ENCODE measurements at regions of chr19 and their contacts with region 1.

Region 1: GRCh38 chr19:41531438-41532311 is 44.3 kb upstream of the CEACAM21 start:
- DNase-seq: peak; percentile 87
- H3K4me3 Mint-ChIP-seq: peak overlapping the region; percentile 82
- H3K27ac Mint-ChIP-seq: peak overlapping the region; percentile 87
- H3K4me1 Mint-ChIP-seq: peaks cover 91% of the 10 kb centered on the region
- H3K27me3 Mint-ChIP-seq: no peaks in the 10 kb centered on the region

Region 2: DNA sequence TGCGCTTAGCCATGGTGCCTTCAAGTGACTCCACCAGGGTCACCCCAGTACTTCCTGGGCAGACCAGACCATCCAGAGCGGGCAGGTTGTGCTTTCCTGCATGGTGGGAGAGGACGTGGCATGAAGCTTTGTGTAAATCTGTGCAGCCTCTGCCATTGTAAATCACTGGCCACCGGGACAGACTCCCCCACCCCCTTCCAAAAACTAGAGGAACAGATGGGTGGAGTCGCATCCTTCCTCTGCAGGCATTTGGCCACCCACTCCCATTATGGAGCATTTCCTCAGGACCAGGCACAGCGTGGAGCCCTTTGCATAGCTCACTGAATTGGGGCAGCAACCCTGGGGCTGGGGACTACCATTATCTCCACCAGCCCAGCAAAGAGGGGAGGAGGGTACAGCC is 125.9 kb before region 1 on chr19:
- intact Hi-C with region 1: no loop called
- DNase-seq: no peak
- H3K4me3 Mint-ChIP-seq: no peak overlapping the region
- H3K27ac Mint-ChIP-seq: no peak overlapping the region
- H3K4me1 Mint-ChIP-seq: no peaks in the 10 kb centered on the region
- H3K27me3 Mint-ChIP-seq: no peaks in the 10 kb centered on the region

Region 3: DNA sequence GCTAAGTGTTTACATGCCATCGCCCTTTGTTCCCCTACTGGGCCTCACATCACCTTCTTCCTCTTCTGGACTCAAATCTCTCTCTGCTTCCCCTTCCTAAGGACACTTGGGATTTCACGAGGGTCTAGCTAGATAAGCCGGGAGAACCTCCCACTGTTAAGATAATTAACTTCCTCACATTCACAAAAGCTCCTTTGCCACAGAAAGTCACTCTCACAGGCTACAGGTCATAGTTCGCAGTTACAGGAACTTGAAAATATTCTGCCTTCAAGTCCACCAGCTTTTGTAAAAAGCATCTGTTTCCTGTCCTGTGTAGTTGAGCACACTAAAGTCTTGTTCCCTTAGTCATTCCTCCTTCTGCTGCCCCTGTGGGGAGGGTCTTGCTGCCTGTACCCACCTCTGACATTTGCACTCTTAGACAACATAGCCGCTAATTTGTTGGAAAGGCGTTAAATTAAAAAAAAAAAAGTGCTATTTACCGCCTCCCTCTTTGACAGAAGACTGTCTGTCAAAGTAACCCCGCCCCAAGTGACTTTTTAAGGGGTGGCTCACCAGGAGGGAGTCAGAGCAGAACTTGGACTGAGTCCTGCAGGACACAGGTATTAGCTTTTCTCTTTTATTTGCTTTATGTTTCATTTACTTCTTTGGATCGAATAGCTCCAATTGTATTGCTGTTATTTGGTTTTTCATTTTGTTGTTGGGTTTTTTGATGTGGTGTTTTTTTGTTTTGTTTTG is 17.4 kb after region 1 on chr19:
- intact Hi-C with region 1: loop called (anchors 2 kb)
- DNase-seq: peak; percentile 78
- H3K4me3 Mint-ChIP-seq: peak overlapping the region; percentile 91
- H3K27ac Mint-ChIP-seq: peak overlapping the region; percentile 93
- H3K4me1 Mint-ChIP-seq: peaks cover 76% of the 10 kb centered on the region
- H3K27me3 Mint-ChIP-seq: no peaks in the 10 kb centered on the region